Activated CD4-positive, alpha-beta memory T cell treated with anti-CD3 and anti-CD28 coated beads, Interleukin-2, amount 10 ng/mL, durations not matched to agents 7 days and 5 days (primary cell): ENCODE measurements at regions of chr10 and their contacts with region 1.

Region 1: GRCh38 chr10:119686439-119687191 is 35.4 kb downstream of the BAG3 start:
- DNase-seq: peak; percentile 79
- H3K4me3 Mint-ChIP-seq: peak overlapping the region; percentile 30
- H3K27ac Mint-ChIP-seq: peak overlapping the region; percentile 36
- H3K4me1 Mint-ChIP-seq: peaks cover 29% of the 10 kb centered on the region
- H3K27me3 Mint-ChIP-seq: peaks cover 5% of the 10 kb centered on the region

Region 2: DNA sequence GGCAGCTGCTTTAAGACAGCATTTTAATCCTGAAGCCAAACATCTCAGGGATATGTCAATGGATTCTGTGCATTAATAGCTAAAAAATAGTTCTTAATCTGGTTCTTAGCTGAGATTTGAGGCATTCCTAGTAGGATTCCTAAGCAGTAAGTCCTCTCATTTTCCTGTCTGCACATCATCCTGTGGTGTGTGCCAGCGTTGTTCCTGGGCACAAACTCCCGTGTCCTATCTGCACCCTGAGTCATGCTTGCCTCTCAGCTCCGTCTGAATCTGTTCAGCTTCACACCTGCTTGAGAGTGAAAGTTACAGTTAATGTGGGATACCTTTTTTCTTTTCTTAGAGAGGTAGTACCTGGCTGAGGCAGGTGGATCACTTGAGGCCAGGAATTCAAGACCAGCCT is 15.9 kb before region 1 on chr10:
- CTCF ChIA-PET with region 1: interaction called, 18 read pairs
- POLR2A ChIA-PET with region 1: no interaction called
- DNase-seq: no peak
- H3K4me3 Mint-ChIP-seq: no peak overlapping the region
- H3K27ac Mint-ChIP-seq: no peak overlapping the region
- H3K4me1 Mint-ChIP-seq: peaks cover 11% of the 10 kb centered on the region
- H3K27me3 Mint-ChIP-seq: no peaks in the 10 kb centered on the region

Region 3: GRCh38 chr10:119705434-119705831 is 18.8 kb after region 1 on chr10:
- CTCF ChIA-PET with region 1: interaction called, 19 read pairs
- POLR2A ChIA-PET with region 1: interaction called, 14 read pairs
- DNase-seq: no peak
- H3K4me3 Mint-ChIP-seq: peak overlapping the region; percentile 72
- H3K27ac Mint-ChIP-seq: peak overlapping the region; percentile 92
- H3K4me1 Mint-ChIP-seq: peaks cover 57% of the 10 kb centered on the region
- H3K27me3 Mint-ChIP-seq: no peaks in the 10 kb centered on the region

Region 4: DNA sequence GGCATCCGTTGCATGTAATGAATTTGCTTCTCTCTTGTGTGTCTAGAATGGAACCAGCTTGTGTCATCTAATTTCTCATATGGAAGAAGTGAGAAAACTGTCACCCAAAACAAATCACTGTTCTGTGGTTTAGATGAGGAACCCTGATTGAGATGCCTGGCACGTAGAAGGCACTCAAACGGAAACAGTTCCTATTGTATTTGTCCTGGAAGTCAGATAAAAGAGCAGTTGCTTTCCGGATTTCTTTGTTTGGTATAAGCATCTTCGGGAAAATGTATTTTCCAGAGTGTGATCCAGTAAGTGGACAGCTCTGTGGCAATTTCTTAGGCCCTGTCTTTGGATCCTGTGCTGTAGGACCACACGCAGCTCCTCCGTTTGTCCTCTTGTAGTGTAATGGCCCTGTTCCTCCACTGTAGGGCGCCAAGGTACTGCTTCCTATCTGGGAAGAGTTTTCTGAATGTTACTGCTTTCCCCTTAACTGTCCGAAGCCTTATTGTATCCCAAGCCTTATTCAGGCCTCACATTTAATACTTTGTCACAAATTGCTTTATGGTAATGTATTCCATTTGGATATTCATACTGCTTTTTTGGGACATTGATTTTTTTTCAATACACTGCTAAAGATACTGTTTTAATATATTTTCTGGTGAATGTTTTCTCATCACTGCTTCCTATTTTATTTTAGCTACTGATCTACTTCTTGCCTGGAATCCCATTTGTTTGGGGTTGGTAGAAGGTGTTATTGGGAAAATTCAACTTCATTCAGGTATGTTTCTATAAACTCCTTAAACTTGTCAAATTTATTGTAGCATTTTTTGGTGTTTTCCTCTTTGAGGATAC is 64.0 kb after region 1 on chr10:
- CTCF ChIA-PET with region 1: interaction called, 34 read pairs
- POLR2A ChIA-PET with region 1: no interaction called
- DNase-seq: peak; percentile 69
- H3K4me3 Mint-ChIP-seq: no peak overlapping the region
- H3K27ac Mint-ChIP-seq: no peak overlapping the region
- H3K4me1 Mint-ChIP-seq: peaks cover 5% of the 10 kb centered on the region
- H3K27me3 Mint-ChIP-seq: no peaks in the 10 kb centered on the region

Region 5: DNA sequence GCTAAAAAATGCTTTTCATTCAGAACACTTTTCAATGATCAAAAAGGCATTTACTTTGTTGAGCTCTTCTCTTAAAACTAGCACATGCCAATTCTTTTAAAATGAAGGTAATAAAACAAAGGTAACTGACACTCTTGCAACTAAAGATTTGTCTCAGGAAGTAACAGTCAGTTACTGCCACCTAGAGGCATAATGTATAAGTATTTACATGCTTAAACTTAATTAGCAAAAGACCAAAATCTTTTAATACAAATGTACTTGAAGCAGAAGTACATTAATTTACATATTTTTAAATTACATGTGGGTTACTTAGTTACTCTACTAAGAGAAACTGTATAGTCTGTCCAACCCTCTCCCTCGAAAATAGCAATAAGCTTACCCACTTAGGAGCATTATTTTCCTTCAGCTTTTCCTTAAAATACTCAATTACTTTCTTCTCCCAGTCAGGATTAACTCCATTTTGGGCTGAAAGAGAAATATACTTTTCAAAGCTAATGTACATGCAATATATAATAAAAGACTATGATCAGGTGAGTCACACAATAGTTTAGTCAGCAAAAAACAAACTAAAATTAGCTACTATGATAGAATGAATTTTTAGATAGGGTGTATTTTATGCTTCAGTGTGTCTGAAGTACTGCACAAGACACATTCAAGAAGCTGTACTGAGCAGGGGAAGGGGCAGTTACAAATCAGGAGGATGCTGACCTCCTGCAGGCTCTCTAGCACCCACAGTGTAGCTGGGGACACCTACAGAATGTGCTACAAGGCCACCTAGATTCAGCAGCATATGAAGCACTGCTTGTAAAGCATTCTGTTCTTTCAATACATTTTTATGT is 173.0 kb after region 1 on chr10:
- CTCF ChIA-PET with region 1: interaction called, 31 read pairs
- POLR2A ChIA-PET with region 1: no interaction called
- DNase-seq: no peak
- H3K4me3 Mint-ChIP-seq: no peak overlapping the region
- H3K27ac Mint-ChIP-seq: no peak overlapping the region
- H3K4me1 Mint-ChIP-seq: peaks cover 45% of the 10 kb centered on the region
- H3K27me3 Mint-ChIP-seq: no peaks in the 10 kb centered on the region